CD14-positive monocyte (primary cell): ENCODE measurements at regions of chr19 and their contacts with region 1.

Region 1: DNA sequence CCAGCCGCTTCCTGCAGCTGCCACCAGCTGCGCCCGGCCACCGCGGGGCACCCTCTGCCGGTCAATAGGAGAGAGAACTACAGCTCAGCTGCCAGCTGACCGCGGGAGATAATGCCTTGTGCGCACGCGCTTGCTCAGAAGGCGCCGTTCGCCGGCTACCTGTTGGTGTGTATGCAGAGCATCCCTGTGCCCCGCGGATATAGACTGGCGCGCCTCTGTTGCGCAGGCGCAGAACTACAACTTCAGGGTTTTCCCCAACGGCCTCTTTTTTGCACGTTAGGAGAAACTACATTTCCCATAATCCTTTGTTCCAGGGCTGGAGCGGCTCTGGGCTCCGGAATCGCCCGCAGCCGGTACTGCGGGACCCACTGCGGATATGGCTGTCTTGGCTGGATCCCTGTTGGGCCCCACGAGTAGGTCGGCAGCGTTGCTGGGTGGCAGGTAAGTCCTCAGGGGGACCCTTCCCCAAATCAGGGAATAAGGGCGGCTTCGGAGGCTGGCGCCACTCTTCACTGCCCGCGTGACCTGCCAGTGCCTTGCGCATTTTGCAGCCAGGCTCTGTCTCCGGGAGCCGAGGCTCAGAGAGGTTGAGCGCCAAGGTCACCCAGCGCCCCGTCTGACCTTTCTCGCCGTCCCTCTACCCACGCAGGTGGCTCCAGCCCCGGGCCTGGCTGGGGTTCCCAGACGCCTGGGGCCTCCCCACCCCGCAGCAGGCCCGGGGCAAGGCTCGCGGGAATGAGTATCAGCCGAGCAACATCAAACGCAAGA is at the start of gene MRPL34:
- DNase-seq: peak; percentile 98 to 99 (median 99)
- H3K4me3 ChIP-seq: peak within 1 kb of the TSS; percentile 53 to 76 (median 75)
- H3K4me3 Mint-ChIP-seq: peak within 1 kb of the TSS; percentile 86 to 90
- H3K27ac ChIP-seq: peak within 1 kb of the TSS; percentile 56 to 82
- H3K27ac Mint-ChIP-seq: peak within 1 kb of the TSS; percentile 82 to 93 (median 90)
- H3K4me1 ChIP-seq: peaks cover 54 to 63% of the 10 kb centered on the region in 2 donors
- H3K4me1 Mint-ChIP-seq: peaks cover 42% of the 10 kb centered on the region
- H3K27me3 ChIP-seq: no peaks in the 10 kb centered on the region
- H3K27me3 Mint-ChIP-seq: peaks cover 0 to 3% (median 0%) of the 10 kb centered on the region in 3 donors
- CTCF ChIP-seq: peak; percentile 81
- polyA plus RNA-seq, gene MRPL34: 13.2 to 208 (median 155) TPM

Region 2: GRCh38 chr19:17266975-17267788 is 38.5 kb before region 1 on chr19 and contains the start of gene BABAM1:
- intact Hi-C with region 1: loop called in 1 of 2 experiments (anchors 2 kb)
- DNase-seq: peak; percentile 97 to 99 (median 98)
- H3K4me3 ChIP-seq: peak within 1 kb of the TSS; percentile 89 to 98 (median 97)
- H3K4me3 Mint-ChIP-seq: peak within 1 kb of the TSS; percentile 87 to 90
- H3K27ac ChIP-seq: peak within 1 kb of the TSS; percentile 64 to 86
- H3K27ac Mint-ChIP-seq: peak within 1 kb of the TSS; percentile 82 to 93 (median 88)
- H3K4me1 ChIP-seq: peaks cover 16 to 17% of the 10 kb centered on the region in 2 donors
- H3K4me1 Mint-ChIP-seq: peaks cover 22% of the 10 kb centered on the region
- H3K27me3 ChIP-seq: no peaks in the 10 kb centered on the region
- H3K27me3 Mint-ChIP-seq: peaks cover 0 to 5% (median 2%) of the 10 kb centered on the region in 3 donors
- CTCF ChIP-seq: no peak
- polyA plus RNA-seq, gene BABAM1: 76.9 to 106 (median 90.3) TPM

Region 3: GRCh38 chr19:17336872-17337722 is 31.4 kb after region 1 on chr19 and contains the start of gene GTPBP3:
- intact Hi-C with region 1: loop called in 1 of 2 experiments (anchors 5 kb)
- DNase-seq: peak; percentile 91 to 96 (median 96)
- H3K4me3 ChIP-seq: peak within 1 kb of the TSS; percentile 69 to 94 (median 90)
- H3K4me3 Mint-ChIP-seq: peak within 1 kb of the TSS; percentile 95 to 99
- H3K27ac ChIP-seq: peak within 1 kb of the TSS; percentile 82 to 90
- H3K27ac Mint-ChIP-seq: peak within 1 kb of the TSS; percentile 89 to 97 (median 92)
- H3K4me1 ChIP-seq: peaks cover 42 to 61% of the 10 kb centered on the region in 2 donors
- H3K4me1 Mint-ChIP-seq: peaks cover 34% of the 10 kb centered on the region
- H3K27me3 ChIP-seq: no peaks in the 10 kb centered on the region
- H3K27me3 Mint-ChIP-seq: peaks cover 0 to 1% (median 0%) of the 10 kb centered on the region in 3 donors
- CTCF ChIP-seq: no peak
- polyA plus RNA-seq, gene GTPBP3: 1.0 to 22.0 (median 1.7) TPM

Region 4: GRCh38 chr19:17358395-17358794 is 52.7 kb after region 1 on chr19:
- intact Hi-C with region 1: no loop called
- DNase-seq: no peak
- H3K4me3 ChIP-seq: no peak overlapping the region
- H3K4me3 Mint-ChIP-seq: no peak overlapping the region
- H3K27ac ChIP-seq: no peak overlapping the region
- H3K27ac Mint-ChIP-seq: peak overlapping the region in 1 of 7 donors; percentile 60
- H3K4me1 ChIP-seq: no peaks in the 10 kb centered on the region
- H3K4me1 Mint-ChIP-seq: peaks cover 6% of the 10 kb centered on the region
- H3K27me3 ChIP-seq: no peaks in the 10 kb centered on the region
- H3K27me3 Mint-ChIP-seq: peaks cover 4 to 9% (median 4%) of the 10 kb centered on the region in 3 donors
- CTCF ChIP-seq: no peak